ENCODE measurements at regions of chr4 and their contacts with region 1.

Region 1: DNA sequence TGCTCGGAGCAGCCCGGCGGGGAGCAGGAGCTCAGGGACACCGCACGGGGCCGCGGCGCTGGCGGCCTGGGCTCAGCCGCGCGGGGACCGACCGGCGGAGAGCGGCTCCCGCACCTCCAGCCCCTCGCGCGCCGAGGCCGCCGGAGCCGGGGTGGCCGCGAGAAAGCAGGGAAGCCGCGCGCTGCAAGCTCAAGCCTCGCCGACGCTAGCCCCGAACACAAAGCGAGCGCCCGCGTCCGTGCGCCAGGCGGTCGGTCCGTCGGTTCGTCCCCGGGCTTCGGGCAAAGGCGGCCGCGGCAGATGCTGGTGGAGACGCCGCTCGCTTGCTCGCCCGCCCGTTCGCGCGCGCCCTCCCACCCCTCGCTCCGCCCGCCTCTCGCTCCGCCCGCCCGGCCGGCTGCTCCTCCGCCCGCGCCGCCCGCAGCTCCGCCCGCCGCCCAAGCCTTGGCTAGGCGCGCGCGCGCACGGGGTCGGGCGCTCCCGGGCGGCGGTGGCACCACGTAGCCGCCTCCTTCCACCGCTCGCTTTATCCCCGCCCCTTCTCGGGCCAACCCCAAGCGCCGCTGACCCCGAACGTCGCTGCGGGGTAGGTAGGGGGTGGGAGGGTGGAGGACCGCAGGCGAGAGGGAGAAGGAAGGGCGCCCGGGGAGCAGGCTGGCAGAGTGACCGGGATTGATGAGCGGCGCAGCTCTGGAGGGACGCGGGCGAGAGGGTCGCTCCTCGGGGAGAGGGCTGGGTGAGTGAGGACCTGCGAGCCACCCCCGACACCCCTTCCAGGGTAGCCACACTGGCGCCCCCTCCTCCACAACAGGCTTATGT is at the start of gene TSPAN5:
- DNase-seq: peak; percentile 91
- ATAC-seq: peak; percentile 62
- H3K4me3 Mint-ChIP-seq: peak within 1 kb of the TSS; percentile 89
- H3K27ac Mint-ChIP-seq: peak within 1 kb of the TSS; percentile 94
- H3K4me1 Mint-ChIP-seq: peaks cover 78% of the 10 kb centered on the region
- H3K27me3 Mint-ChIP-seq: no peaks in the 10 kb centered on the region
- total RNA-seq, gene TSPAN5: 18.4 to 23.6 TPM

Region 2: GRCh38 chr4:98260579-98261290 is 397.8 kb before region 1 on chr4:
- CTCF ChIA-PET with region 1: no interaction called
- POLR2A ChIA-PET with region 1: no interaction called
- intact Hi-C with region 1: loop called (anchors 1 to 2 kb)
- DNase-seq: peak; percentile 97
- ATAC-seq: peak; percentile 89
- H3K4me3 Mint-ChIP-seq: peak overlapping the region; percentile 91
- H3K27ac Mint-ChIP-seq: peak overlapping the region; percentile 95
- H3K4me1 Mint-ChIP-seq: peaks cover 49% of the 10 kb centered on the region
- H3K27me3 Mint-ChIP-seq: no peaks in the 10 kb centered on the region

Region 3: DNA sequence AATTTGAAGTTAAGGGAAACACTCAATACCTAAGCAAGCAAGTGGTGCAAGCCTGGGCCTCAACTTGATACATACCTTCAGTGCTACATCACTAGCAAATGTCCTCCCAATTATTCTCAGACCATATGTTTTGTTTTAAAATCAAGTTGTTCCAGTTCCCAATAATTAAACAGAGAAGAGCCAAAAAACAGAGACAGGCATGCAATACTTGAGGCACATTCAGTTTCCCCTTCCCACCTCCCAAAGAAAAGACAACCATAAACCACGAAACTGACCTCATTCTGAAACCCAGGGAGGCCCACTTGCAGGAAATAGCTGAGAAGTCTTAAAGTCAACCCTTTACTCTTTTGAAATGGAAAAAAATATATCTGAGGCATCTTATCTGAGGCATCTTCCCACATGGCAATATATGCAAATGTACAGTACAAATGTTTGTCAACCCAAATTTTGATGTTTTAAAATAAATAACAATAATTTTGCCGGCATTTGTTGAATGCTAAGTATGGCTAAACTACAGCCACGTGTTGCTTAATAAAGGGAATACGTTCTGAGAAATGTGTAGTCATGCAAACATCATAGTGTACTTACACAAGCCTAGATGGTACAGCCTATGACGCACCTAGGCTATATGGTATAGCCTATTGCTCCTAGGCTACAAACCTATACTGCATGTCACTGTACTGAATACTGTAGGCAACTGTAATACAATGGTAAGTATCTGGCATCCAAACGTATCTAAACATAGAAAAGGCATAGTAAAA is 147.6 kb before region 1 on chr4:
- CTCF ChIA-PET with region 1: interaction called, 5 read pairs
- POLR2A ChIA-PET with region 1: no interaction called
- intact Hi-C with region 1: loop called (anchors 1 to 2 kb)
- DNase-seq: peak; percentile 65
- ATAC-seq: peak; percentile 88
- H3K4me3 Mint-ChIP-seq: no peak overlapping the region
- H3K27ac Mint-ChIP-seq: peak overlapping the region; percentile 75
- H3K4me1 Mint-ChIP-seq: peaks cover 53% of the 10 kb centered on the region
- H3K27me3 Mint-ChIP-seq: no peaks in the 10 kb centered on the region

Region 4: DNA sequence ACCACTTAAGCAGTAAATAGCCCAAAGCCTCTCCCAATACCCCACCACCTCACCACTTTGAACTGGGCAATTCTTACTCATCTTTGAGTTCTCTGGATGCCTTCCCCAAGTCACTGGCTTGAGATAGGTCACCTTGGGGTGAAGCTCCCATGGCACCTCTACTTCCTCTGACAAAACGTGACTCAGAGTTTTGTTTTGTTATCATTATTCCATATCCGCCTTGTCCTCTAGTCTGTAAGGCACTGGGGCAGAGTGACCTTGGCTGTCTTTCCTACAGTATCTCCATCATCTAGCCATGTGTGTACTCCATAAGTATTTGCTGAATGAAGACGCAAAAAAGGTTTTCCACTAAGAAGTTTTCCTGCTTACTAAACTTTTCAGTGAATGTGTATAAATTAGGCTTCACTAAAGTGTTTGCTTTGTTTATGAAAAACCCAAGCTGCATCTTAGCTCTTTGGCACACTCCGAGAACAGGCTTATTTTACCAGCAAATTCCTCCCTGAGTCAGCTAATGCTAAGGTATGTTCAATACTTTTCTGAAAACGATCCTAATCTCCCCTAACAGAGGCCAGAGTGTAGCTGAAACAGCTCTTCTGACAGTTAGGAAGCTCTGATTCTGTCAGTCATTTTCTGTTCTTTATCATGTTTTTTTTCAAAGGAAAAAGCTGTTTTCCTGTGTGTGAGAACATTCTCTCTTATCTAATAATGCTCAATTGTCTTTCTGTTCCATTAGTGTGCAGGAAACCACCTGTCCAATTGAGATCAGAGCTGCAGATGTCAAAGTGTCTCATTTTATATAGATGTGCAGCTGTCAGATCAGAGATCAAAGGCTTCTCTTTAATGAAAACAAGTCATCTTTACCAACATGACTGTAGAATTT is 30.2 kb after region 1 on chr4:
- CTCF ChIA-PET with region 1: interaction called, 6 read pairs
- POLR2A ChIA-PET with region 1: no interaction called
- intact Hi-C with region 1: loop called (anchors 1 kb)
- DNase-seq: peak; percentile 51
- ATAC-seq: peak; percentile 90
- H3K4me3 Mint-ChIP-seq: peak overlapping the region; percentile 2
- H3K27ac Mint-ChIP-seq: peak overlapping the region; percentile 67
- H3K4me1 Mint-ChIP-seq: peaks cover 39% of the 10 kb centered on the region
- H3K27me3 Mint-ChIP-seq: no peaks in the 10 kb centered on the region

Region 5: DNA sequence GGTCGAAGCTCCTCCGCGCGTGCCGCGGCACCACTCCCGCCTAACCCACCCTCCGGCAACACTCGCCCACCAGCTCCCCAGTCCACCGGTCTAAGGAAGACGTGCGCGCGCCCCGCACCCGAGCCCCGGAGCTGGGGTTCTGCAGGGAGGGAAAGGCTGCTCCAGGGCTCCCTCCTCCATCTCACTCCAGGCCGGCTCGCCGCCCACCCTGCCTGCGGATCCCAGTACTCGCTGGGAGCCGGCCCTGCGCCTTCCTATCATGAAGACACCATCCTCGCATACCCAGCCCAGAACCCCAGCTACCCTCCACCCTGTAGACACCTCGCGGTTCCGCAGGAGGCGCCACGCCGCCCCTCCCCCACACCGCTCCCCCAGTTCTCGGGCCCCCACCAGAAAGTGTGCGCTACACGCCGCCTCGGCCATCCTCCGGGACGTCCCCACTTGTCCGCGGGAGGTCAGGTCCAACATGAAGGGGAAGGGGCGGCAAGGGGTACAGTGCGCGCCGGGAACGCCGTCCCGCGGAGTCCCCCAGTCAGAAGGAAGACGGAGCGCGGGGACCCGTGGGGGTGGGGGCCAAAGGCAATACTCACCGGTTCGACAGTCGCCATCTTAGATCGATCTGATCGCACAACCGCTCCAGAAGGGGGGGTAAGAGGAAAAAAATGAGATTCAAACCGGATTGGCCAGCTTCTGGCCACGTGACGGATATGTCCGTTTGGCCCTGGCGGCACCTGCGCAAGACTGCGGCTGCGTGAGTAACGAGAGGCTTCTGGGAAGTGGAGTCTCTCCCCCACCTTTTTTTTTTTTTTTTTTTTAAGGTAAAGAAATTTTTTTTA is 270.2 kb after region 1 on chr4 and contains the start of gene EIF4E:
- CTCF ChIA-PET with region 1: no interaction called
- POLR2A ChIA-PET with region 1: no interaction called
- intact Hi-C with region 1: loop called (anchors 1 kb)
- DNase-seq: peak; percentile 98
- ATAC-seq: peak; percentile 80
- H3K4me3 Mint-ChIP-seq: peak within 1 kb of the TSS; percentile 92
- H3K27ac Mint-ChIP-seq: peak within 1 kb of the TSS; percentile 100
- H3K4me1 Mint-ChIP-seq: peaks cover 47% of the 10 kb centered on the region
- H3K27me3 Mint-ChIP-seq: no peaks in the 10 kb centered on the region
- total RNA-seq, gene EIF4E: 132 to 149 TPM

Region 6: DNA sequence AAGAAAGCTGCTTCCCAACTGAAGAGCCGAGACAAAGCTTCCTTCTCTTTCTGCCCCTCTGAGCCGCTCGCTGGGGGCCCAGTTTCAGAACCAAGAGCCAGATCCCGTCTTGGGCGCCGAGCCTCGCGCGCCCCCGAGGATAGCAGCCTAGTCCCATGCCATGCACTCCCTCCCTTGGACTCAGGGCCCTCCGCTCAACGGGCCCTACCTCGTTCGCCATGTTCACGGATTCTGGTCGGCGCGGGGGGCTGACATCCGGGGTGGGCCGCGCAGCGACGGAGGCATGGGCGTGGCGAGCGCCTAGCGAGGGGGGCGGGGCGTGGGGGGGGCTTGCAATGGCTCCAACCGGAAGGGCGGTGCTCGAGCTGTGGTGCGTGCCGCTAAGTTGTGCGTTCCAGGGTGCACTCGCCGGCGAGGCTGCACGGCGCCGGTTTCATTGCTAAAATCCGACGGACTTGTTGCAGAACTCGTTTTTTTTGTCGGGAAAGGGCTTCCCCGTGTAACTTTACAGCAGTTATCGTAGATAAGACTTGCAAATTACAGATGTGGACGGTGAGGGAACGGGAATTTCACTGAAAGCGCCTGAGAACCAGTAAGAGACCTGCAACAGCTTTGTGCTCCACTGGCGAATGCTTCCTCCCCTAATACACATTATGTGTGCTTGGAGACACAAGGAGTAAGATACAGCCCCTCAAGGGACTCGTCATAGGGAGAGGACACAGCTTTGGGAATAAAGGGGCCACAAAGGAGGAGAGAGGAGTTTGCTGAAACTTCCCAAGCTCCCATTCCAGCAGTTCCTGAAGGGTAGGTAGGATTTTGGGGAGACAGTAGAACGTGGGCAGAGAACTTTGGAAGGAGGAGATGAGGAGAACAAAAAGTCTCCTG is 430.2 kb after region 1 on chr4 and contains the start of gene ADH5:
- CTCF ChIA-PET with region 1: no interaction called
- POLR2A ChIA-PET with region 1: no interaction called
- intact Hi-C with region 1: loop called in 1 of 2 experiments (anchors 1 kb)
- DNase-seq: peak; percentile 96
- ATAC-seq: peak; percentile 97
- H3K4me3 Mint-ChIP-seq: peak within 1 kb of the TSS; percentile 98
- H3K27ac Mint-ChIP-seq: peak within 1 kb of the TSS; percentile 99
- H3K4me1 Mint-ChIP-seq: peaks cover 42% of the 10 kb centered on the region
- H3K27me3 Mint-ChIP-seq: no peaks in the 10 kb centered on the region
- total RNA-seq, gene ADH5: 81.3 to 119 TPM

Measured in activated CD4-positive, alpha-beta T cell treated with anti-CD3 and anti-CD28 coated beads for 36 hours (primary cell).